ENCODE measurements at regions of chr4 and their contacts with region 1.

Region 1: GRCh38 chr4:88378691-88379559 is at the start of gene HERC6:
- DNase-seq: peak; percentile 64 to 80
- H3K4me3 ChIP-seq: peak within 1 kb of the TSS; percentile 74
- H3K27ac ChIP-seq: peak within 1 kb of the TSS; percentile 91
- H3K4me1 ChIP-seq: no peaks in the 10 kb centered on the region
- H3K27me3 ChIP-seq: no peaks in the 10 kb centered on the region
- CTCF ChIP-seq: peak; percentile 66; the same call in 1 of the 2 replicates
- total RNA-seq, gene HERC6: 4.9 and 5.6 TPM in 2 replicates

Region 2: GRCh38 chr4:88217920-88218319 is 161.0 kb before region 1 on chr4:
- CTCF ChIA-PET with region 1: no interaction called
- POLR2A ChIA-PET with region 1: no interaction called
- intact Hi-C with region 1: loop called (anchors 2 kb)
- DNase-seq: no peak
- H3K4me3 ChIP-seq: no peak overlapping the region
- H3K27ac ChIP-seq: no peak overlapping the region
- H3K4me1 ChIP-seq: no peaks in the 10 kb centered on the region
- H3K27me3 ChIP-seq: no peaks in the 10 kb centered on the region
- CTCF ChIP-seq: no peak

Region 3: GRCh38 chr4:88456757-88457306 is 77.9 kb after region 1 on chr4 and contains the start of gene HERC5:
- CTCF ChIA-PET with region 1: no interaction called
- POLR2A ChIA-PET with region 1: no interaction called
- intact Hi-C with region 1: loop called (anchors 1 kb)
- DNase-seq: peak; percentile 85 to 86
- H3K4me3 ChIP-seq: peak within 1 kb of the TSS; percentile 56; the same call in 1 of the 2 replicates
- H3K27ac ChIP-seq: no peak within 1 kb of the TSS
- H3K4me1 ChIP-seq: no peaks in the 10 kb centered on the region
- H3K27me3 ChIP-seq: no peaks in the 10 kb centered on the region
- CTCF ChIP-seq: peak; percentile 65
- total RNA-seq, gene HERC5: 3.6 and 4.6 TPM in 2 replicates

Measured in PC-9 (cell line).